Breast epithelium (tissue), 4 donors: ENCODE measurements at regions of chr5 and their contacts with region 1.

Region 1: DNA sequence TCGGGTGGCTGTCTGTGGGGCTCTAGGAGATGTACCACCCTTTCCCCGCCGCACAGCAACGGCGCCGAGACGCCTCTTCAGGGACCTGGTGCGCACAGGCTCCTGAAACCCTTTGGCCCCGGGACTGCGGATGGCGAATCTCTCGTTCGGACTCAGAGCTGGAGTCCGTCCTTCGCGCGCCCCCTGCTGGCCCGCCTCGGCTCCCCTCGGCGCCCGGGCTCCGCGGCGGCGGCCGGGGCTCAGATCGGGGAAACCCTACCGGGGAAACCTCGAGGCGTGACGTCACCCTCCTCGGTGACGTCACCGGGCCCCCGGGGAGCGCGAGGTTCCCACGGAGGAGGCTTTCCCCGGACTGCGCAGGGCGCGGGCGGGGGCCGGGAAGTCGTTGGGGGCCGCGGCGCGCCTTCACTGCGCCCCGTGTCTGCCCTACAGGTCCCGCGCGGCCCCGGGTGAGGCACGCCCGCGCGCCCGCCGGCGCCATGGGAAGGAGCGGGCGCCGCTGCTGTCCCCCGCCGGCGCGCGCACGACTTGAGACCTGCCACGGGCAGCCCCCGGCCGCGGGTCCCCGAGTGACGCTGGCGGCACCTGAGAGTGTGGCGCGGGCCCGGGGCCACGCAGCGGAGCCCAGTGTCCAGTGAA is 7.9 kb downstream of the PRR7 start:
- DNase-seq: peak; percentile 92 to 93
- H3K4me3 ChIP-seq: peak overlapping the region; percentile 45 to 79 (median 60)
- H3K27ac ChIP-seq: peak overlapping the region; percentile 73 to 82
- H3K4me1 ChIP-seq: no peaks in the 10 kb centered on the region
- H3K27me3 ChIP-seq: peaks cover 0 to 2% of the 10 kb centered on the region in 2 donors
- CTCF ChIP-seq: peak; percentile 87 to 97 (median 94)
- POLR2A ChIP-seq: no peak

Region 2: DNA sequence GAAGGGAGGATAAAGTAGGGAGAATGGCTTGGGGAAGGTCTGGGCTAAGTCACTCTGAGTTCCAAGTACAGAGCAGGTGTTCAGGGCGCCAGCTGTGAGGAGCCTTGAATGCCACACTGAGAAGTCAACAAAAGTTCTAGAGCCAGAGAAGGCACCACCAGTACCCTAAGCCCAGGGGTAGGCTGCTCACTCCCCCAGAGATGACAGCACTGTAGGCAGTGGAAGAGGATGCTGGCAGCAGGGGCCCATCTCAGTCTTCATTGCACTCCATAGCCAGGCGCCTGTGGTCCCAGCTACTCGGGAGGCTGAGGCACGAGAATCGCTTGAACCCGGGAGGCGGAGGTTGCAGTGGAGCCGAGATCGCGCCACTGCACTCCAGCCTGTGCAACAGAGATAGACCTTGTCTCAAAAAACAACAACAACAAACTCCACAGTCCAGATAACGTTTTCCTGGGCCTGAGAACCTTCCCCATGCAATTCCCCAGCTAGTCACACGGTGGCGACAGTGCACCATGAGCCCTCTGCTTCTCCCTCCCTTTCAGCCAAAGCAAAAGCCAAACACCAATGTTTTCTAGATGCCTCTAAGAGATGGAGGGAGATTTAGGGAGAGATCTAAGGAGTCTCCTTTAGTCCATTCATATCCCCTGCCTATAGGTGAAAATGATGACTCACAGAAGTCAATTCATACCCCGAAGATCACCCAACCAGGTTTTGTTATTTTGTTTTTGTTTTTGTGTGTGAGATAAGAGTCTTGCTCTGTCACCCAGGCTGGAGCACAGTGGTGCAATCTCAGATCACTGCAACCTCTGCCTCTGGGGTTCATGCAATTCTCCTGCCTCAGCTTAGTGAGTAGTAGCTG is 340.7 kb before region 1 on chr5:
- intact Hi-C with region 1: loop called (anchors 10 kb)
- DNase-seq: peak; percentile 53 to 78
- H3K4me3 ChIP-seq: no peak overlapping the region
- H3K27ac ChIP-seq: peak overlapping the region in 1 of 2 donors; percentile 23
- H3K4me1 ChIP-seq: no peaks in the 10 kb centered on the region
- H3K27me3 ChIP-seq: no peaks in the 10 kb centered on the region
- CTCF ChIP-seq: peak; percentile 89 to 98 (median 96)
- POLR2A ChIP-seq: no peak

Region 3: GRCh38 chr5:177403792-177404640 is 50.5 kb before region 1 on chr5:
- intact Hi-C with region 1: loop called (anchors 5 kb)
- DNase-seq: peak; percentile 77 to 85
- H3K4me3 ChIP-seq: peak overlapping the region; percentile 43 to 71 (median 63)
- H3K27ac ChIP-seq: peak overlapping the region; percentile 11 to 58
- H3K4me1 ChIP-seq: peaks cover 5 to 14% of the 10 kb centered on the region in 2 donors
- H3K27me3 ChIP-seq: peaks cover 9 to 27% of the 10 kb centered on the region in 2 donors
- CTCF ChIP-seq: peak; percentile 24 to 82 (median 65)
- POLR2A ChIP-seq: no peak

Region 4: GRCh38 chr5:177425801-177426565 is 28.5 kb before region 1 on chr5:
- intact Hi-C with region 1: loop called (anchors 1 kb)
- DNase-seq: peak; percentile 99 to 100
- H3K4me3 ChIP-seq: peak overlapping the region; percentile 50 to 88 (median 70)
- H3K27ac ChIP-seq: peak overlapping the region; percentile 89 to 96
- H3K4me1 ChIP-seq: peaks cover 5 to 17% of the 10 kb centered on the region in 2 donors
- H3K27me3 ChIP-seq: no peaks in the 10 kb centered on the region
- CTCF ChIP-seq: peak in 1 of 3 donors; percentile 6
- POLR2A ChIP-seq: peak; percentile 56